Activated naive CD4-positive, alpha-beta T cell treated with anti-CD3 and anti-CD28 coated beads for 36 hours (primary cell): ENCODE measurements at regions of chr20 and their contacts with region 1.

Region 1: GRCh38 chr20:57596998-57597939 is 23.0 kb downstream of the ZBP1 start:
- DNase-seq: peak; percentile 69
- H3K4me3 Mint-ChIP-seq: no peak overlapping the region
- H3K27ac Mint-ChIP-seq: no peak overlapping the region
- H3K4me1 Mint-ChIP-seq: peaks cover 1% of the 10 kb centered on the region
- H3K27me3 Mint-ChIP-seq: no peaks in the 10 kb centered on the region

Region 2: GRCh38 chr20:57263801-57264792 is 333.2 kb before region 1 on chr20:
- CTCF ChIA-PET with region 1: no interaction called
- intact Hi-C with region 1: no loop called
- DNase-seq: no peak
- H3K4me3 Mint-ChIP-seq: no peak overlapping the region
- H3K27ac Mint-ChIP-seq: no peak overlapping the region
- H3K4me1 Mint-ChIP-seq: peaks cover 5% of the 10 kb centered on the region
- H3K27me3 Mint-ChIP-seq: peaks cover 74% of the 10 kb centered on the region

Region 3: DNA sequence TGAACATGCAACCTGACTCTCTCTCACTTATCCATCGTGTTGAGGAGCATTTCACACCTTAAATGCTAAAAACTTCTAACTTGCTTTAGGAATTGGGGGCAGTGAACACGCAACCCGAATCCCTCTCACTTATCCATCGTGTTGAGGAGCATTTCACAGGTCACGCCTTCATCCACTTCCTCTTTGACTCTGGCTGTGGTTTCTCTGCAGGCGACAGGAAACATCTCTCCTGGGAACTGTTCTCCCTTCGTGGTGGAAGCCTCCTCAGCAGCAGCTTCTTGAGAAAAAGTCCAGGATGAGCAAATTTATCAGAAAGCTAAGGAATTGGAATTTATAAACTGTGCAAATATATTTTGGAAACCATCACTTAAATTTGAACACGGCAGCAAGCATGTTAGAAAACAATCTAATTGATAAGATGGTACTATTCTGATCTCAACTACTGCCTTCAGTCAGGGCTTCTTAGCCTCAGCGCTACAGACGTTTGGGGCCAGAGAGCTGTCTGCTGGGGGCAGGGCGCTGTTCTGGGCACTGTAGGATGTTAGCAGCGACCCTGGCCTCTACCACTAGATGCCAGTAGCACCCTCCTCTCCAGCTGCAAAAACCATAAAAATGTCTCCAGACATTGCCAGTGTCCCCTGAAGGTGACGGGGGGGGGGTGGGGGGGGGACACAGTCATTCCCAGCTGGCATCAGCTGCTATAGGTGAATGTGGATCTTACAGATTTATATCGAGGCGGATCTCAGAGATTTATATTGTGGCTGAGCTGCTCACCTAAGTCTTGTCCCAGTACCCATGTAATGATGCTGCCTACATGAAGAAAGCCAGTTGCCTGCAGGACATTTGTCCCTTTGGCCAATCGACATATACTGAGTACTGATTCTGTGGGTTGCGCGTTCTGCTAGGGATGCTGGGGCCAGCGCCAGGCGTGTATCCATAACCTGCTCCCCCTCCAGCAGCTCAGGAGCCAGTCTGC is 98.6 kb before region 1 on chr20:
- CTCF ChIA-PET with region 1: interaction called, 22 read pairs
- intact Hi-C with region 1: loop called (anchors 1 kb)
- DNase-seq: peak; percentile 65
- H3K4me3 Mint-ChIP-seq: no peak overlapping the region
- H3K27ac Mint-ChIP-seq: no peak overlapping the region
- H3K4me1 Mint-ChIP-seq: peaks cover 10% of the 10 kb centered on the region
- H3K27me3 Mint-ChIP-seq: peaks cover 15% of the 10 kb centered on the region

Region 4: GRCh38 chr20:57654363-57654997 is 57.2 kb after region 1 on chr20:
- CTCF ChIA-PET with region 1: interaction called, 9 read pairs
- intact Hi-C with region 1: loop called (anchors 2 kb)
- DNase-seq: peak; percentile 73
- H3K4me3 Mint-ChIP-seq: no peak overlapping the region
- H3K27ac Mint-ChIP-seq: no peak overlapping the region
- H3K4me1 Mint-ChIP-seq: peaks cover 18% of the 10 kb centered on the region
- H3K27me3 Mint-ChIP-seq: no peaks in the 10 kb centered on the region

Region 5: GRCh38 chr20:57760698-57761415 is 163.6 kb after region 1 on chr20:
- CTCF ChIA-PET with region 1: no interaction called
- intact Hi-C with region 1: no loop called
- DNase-seq: no peak
- H3K4me3 Mint-ChIP-seq: no peak overlapping the region
- H3K27ac Mint-ChIP-seq: no peak overlapping the region
- H3K4me1 Mint-ChIP-seq: no peaks in the 10 kb centered on the region
- H3K27me3 Mint-ChIP-seq: peaks cover 2% of the 10 kb centered on the region

Region 6: GRCh38 chr20:58087193-58087858 is 490.1 kb after region 1 on chr20:
- CTCF ChIA-PET with region 1: interaction called, 5 read pairs
- intact Hi-C with region 1: loop called (anchors 1 kb)
- DNase-seq: peak; percentile 45
- H3K4me3 Mint-ChIP-seq: no peak overlapping the region
- H3K27ac Mint-ChIP-seq: no peak overlapping the region
- H3K4me1 Mint-ChIP-seq: no peaks in the 10 kb centered on the region
- H3K27me3 Mint-ChIP-seq: no peaks in the 10 kb centered on the region

Region 7: GRCh38 chr20:58209652-58210397 is 612.6 kb after region 1 on chr20:
- CTCF ChIA-PET with region 1: interaction called, 6 read pairs
- intact Hi-C with region 1: loop called (anchors 1 kb)
- DNase-seq: peak; percentile 89
- H3K4me3 Mint-ChIP-seq: no peak overlapping the region
- H3K27ac Mint-ChIP-seq: no peak overlapping the region
- H3K4me1 Mint-ChIP-seq: peaks cover 2% of the 10 kb centered on the region
- H3K27me3 Mint-ChIP-seq: peaks cover 4% of the 10 kb centered on the region

Region 8: DNA sequence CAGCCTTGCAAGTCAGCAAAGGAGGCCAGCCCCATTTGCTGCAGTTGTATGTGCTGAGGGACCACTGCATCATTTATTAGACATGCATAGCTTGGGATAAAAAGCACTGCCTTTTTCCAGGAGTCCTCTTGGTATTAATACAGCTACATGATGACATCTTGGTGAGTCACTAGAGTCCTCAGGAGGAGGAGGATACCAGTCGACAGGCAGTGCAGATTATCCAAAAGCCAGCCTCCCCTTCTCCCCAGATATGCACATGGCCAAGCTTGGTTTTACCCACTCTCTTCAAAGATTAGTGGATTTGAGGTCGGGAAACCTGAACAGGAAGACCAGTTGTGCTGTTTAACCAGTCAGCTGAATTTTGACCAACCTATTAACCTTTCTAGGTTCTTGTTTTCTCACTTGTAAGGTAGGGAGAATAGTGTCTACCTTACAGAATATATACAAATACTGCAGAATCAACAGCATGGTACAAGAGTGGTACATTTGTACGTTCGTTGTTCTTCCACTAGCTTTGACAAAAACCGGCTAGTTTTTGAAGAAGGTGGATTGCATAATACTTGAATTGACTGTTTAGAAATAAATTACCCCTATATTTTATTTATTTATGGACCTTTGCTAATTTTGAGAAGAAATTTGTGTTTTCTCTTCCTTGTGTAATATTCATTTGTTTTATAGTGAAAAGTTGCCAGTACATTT is 823.7 kb after region 1 on chr20:
- CTCF ChIA-PET with region 1: no interaction called
- intact Hi-C with region 1: no loop called
- DNase-seq: no peak
- H3K4me3 Mint-ChIP-seq: no peak overlapping the region
- H3K27ac Mint-ChIP-seq: no peak overlapping the region
- H3K4me1 Mint-ChIP-seq: peaks cover 33% of the 10 kb centered on the region
- H3K27me3 Mint-ChIP-seq: no peaks in the 10 kb centered on the region